Vagina (tissue), 2 donors: ENCODE measurements at regions of chr2 and their contacts with region 1.

Region 1: GRCh38 chr2:50385349-50385748 is 646.6 kb downstream of the NRXN1 start:
- DNase-seq: no peak
- H3K4me3 ChIP-seq: no peak overlapping the region
- H3K27ac ChIP-seq: no peak overlapping the region
- H3K4me1 ChIP-seq: no peaks in the 10 kb centered on the region
- H3K27me3 ChIP-seq: no peaks in the 10 kb centered on the region
- CTCF ChIP-seq: no peak
- POLR2A ChIP-seq: no peak

Region 2: DNA sequence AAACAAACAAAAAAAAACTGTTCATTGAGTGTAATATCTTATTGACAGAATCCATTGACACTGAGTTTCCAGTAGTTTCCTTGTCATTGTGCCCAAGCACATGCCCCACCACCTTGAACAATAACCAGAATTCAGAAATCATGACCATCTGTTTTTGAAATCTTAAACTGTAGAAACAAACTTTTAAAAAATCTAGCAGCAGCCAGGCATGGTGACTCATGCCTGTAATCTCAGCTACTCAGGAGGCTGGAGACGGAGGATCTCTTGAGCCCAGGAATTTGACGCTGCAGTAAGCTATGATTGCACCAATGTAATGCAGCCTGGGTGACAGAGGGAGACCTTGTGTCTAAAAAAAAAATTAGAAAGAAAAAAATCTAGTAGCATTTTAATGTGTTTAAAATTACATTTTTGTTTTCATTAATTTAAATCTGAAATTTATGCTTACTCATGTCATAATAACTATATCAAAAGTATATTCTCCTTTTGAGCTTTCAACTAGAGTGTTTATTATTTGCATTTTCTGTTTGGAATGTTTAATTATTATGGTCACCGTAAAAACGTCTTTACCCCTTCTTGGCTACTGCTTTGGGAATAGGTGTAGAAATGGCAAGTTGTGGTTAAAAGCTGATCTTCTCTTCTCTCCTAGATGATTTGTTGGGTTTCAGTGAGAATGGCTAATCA is 1880.6 kb before region 1 on chr2:
- intact Hi-C with region 1: no loop called
- DNase-seq: no peak
- H3K4me3 ChIP-seq: no peak overlapping the region
- H3K27ac ChIP-seq: no peak overlapping the region
- H3K4me1 ChIP-seq: peaks cover 8% of the 10 kb centered on the region
- H3K27me3 ChIP-seq: no peaks in the 10 kb centered on the region
- CTCF ChIP-seq: no peak
- POLR2A ChIP-seq: no peak

Region 3: GRCh38 chr2:50126845-50127244 is 258.5 kb before region 1 on chr2:
- intact Hi-C with region 1: no loop called
- DNase-seq: no peak
- H3K4me3 ChIP-seq: no peak overlapping the region
- H3K27ac ChIP-seq: no peak overlapping the region
- H3K4me1 ChIP-seq: no peaks in the 10 kb centered on the region
- H3K27me3 ChIP-seq: no peaks in the 10 kb centered on the region
- CTCF ChIP-seq: no peak
- POLR2A ChIP-seq: no peak

Region 4: DNA sequence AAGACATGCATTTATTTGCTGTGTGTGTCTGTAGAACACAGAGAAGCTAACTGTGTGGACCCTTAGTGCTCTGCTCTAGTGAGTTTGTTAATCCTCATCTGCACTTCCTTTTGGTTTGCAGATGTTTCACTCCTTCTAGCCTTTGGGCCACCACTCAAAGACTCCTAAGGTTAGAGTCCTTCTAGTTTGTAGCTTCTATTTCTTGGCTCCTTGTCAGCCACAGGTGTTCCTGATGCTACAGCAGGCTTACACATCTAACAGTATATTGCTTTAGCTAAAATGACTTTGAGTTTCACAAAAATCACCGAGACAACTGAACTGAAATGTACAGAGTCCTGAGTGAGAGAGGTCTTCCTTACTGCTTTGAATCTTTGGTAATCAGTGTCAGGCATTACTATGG is 95.2 kb after region 1 on chr2:
- intact Hi-C with region 1: no loop called
- DNase-seq: no peak
- H3K4me3 ChIP-seq: no peak overlapping the region
- H3K27ac ChIP-seq: no peak overlapping the region
- H3K4me1 ChIP-seq: no peaks in the 10 kb centered on the region
- H3K27me3 ChIP-seq: no peaks in the 10 kb centered on the region
- CTCF ChIP-seq: no peak
- POLR2A ChIP-seq: no peak

Region 5: DNA sequence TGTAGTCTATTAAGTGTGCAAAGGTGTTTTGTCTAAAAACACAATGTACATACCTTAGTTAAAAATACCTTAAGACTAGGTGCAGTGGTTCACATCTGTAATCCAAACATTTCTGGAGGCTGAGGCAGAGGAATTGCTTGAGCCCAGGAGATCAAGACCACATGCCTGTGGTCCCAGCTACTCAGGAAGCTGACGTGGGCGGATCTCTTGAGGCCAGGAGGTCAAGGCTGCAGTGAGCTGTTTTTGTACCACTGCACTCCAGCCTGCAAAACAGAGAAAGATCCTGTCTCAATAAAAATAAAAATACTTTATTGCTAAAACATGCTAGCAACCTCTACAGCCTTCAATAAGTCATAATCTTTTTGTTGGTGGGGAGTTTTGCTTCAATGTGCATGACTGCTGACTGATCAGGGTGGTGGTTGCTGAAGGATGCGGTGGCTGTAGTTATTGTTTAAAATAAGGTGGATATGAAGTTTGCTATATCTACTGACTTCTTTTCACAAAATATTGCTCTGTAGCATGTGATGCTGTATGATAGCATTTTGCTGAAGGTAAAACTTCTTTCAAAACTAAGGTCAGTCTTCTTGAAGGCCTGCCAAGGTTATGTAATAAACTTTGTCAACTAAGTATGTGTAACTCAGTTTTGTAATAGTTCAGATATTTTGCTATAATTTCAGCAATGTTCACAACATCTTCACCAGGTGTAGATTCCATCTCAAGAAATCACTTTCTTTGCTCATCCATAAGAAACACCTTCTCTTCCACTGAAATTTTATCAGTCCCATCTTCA is 1884.5 kb after region 1 on chr2:
- intact Hi-C with region 1: loop called (anchors 5 kb)
- DNase-seq: no peak
- H3K4me3 ChIP-seq: no peak overlapping the region
- H3K27ac ChIP-seq: no peak overlapping the region
- H3K4me1 ChIP-seq: no peaks in the 10 kb centered on the region
- H3K27me3 ChIP-seq: no peaks in the 10 kb centered on the region
- CTCF ChIP-seq: no peak
- POLR2A ChIP-seq: no peak